ENCODE measurements at regions of chr1 and their contacts with region 1.

Region 1: DNA sequence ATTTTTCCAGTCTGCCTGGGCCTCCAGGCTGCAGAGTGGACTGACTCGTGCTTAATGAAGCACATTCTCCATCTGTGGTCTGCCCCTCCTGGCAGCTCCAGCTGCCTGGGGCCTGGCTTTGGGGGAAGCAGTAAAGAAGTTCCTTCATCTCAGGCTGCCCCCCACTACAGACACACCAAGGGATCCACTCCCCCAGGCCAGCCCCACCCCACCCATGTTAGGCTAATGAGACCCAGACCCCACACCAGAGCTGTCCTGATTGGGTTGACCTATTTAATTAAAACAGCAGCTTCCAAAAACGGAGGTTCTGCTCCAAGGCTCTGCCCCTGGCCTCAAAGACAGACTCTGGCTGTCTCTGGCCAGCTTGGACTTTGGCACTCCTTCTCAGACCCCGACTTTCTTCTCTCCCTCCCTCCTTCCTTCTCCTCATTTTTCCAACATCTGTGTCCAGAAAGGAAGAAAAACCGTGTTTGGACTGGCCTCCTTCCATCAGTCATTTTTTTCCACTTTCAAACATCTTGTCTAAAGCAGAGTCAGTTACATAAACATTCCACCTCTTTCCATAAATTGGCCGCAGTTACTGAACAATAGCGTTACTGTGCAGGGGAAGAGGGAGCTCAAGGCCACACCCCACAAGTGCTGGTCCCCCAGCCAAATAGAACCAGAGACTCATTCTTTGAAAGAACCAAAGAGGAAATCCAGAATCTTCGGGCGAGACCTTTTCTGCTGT is 29.7 kb downstream of the SERTAD4 start:
- DNase-seq: no peak
- H3K4me3 ChIP-seq: no peak overlapping the region
- H3K27ac ChIP-seq: no peak overlapping the region
- H3K4me1 ChIP-seq: no peaks in the 10 kb centered on the region
- H3K27me3 ChIP-seq: no peaks in the 10 kb centered on the region
- CTCF ChIP-seq: no peak

Region 2: DNA sequence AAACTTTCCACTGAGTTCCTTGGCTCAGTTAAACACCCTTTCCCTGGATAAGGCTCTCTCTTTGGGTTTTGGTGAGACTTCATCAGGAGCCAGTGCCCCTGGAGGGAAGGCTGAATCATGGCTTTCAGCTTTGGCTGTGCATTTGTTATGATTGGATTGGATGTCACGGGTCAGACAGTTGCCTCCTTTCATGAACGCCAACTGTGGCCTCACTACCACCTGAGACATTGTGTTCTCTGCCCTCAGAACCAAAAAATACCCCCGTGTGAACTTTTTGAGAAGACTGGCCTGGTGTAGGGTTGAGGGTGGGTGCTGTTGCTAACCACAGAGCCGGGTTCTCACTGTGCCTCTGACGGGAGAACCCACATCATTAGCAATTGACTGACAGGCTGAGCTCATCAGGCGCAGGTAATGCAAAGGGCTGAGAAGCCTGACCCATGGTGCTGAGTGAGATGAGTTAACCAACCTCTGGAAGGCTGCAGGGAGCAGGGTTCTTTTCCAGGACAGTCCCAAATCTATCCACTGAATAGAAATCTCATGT is 132.0 kb after region 1 on chr1:
- CTCF ChIA-PET with region 1: interaction called, 10 read pairs
- POLR2A ChIA-PET with region 1: no interaction called
- intact Hi-C with region 1: no loop called
- DNase-seq: no peak
- H3K4me3 ChIP-seq: no peak overlapping the region
- H3K27ac ChIP-seq: no peak overlapping the region
- H3K4me1 ChIP-seq: no peaks in the 10 kb centered on the region
- H3K27me3 ChIP-seq: no peaks in the 10 kb centered on the region
- CTCF ChIP-seq: no peak